Heart right ventricle (tissue), 16 donors: ENCODE measurements at regions of chr6 and their contacts with region 1.

Region 1: GRCh38 chr6:34161857-34162515 is 16.1 kb upstream of the GRM4 start:
- DNase-seq: no peak
- ATAC-seq: peak in 1 of 8 donors; percentile 40
- H3K4me3 ChIP-seq: no peak overlapping the region
- H3K27ac ChIP-seq: no peak overlapping the region
- H3K4me1 ChIP-seq: no peaks in the 10 kb centered on the region
- H3K27me3 ChIP-seq: no peaks in the 10 kb centered on the region
- CTCF ChIP-seq: no peak

Region 2: DNA sequence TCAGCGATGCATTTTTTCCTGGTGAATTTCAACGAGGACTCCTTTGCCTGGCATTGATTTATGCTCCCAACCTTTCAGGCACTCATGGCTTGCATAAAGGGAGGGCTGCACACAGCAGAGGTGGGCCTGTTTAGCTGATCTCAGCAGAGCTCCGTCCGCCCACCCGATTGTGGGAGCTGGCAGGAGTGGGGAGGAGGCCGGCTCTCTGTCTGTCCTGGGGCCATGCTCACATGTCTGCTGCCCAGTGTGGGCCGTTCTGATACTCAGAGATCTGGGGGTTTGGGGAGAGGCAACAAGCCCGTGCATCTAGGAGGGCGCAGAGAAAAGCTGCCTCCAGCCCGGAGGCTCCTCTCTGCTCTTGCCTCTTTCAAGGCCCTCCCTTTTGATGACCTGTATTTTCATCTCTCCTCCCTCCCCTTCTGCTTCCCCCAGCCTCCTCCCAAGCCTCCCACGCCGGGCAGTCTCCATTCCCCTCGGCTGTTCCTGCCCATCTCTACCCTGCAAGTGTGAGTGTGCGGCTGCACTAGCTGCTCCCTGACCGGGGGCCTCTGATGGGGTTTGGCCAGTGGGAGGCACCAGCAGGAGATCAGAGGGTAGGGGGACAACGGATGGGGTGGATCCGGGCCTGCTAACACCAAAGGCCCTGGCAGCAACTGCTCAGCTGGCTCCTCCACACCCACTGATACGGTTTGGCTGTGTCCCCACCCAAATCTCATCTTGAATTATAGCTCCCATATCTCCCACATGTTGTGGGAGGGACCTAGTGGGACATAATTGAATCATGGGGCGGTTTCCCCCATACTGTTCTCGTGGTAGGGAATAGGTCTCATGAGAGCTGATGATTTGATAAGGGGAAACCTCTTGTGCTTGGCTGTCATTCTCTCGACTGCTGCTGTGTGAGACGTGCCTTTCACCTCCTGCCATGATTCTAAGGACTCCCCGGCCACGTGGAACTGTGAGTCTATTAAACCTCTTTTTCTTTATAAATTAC is 318.6 kb before region 1 on chr6:
- intact Hi-C with region 1: no loop called
- DNase-seq: no peak
- ATAC-seq: no peak
- H3K4me3 ChIP-seq: no peak overlapping the region
- H3K27ac ChIP-seq: no peak overlapping the region
- H3K4me1 ChIP-seq: peaks cover 0 to 25% (median 3%) of the 10 kb centered on the region in 9 donors
- H3K27me3 ChIP-seq: peaks cover 0 to 13% (median 0%) of the 10 kb centered on the region in 7 donors
- CTCF ChIP-seq: no peak

Region 3: DNA sequence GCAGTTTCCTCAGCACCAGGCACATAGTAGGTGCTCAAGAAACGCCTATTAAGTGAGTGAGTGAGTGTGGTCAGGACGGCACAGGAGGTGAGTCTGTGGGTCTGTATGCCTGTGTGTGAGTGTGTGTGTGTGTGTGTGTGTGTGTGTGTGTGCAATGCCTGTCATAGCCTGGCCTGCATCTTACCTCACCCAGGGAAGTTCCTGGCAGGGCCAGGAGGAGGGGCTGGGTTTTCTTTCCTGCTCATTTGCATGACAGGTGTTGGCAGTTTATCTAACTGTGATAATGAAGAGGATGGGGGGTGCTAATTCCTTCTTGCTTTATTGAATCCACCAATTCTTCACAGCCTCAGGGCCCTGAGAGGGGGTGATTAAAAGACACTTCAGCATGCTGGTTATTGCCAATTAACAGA is 211.5 kb before region 1 on chr6:
- intact Hi-C with region 1: no loop called
- DNase-seq: no peak
- ATAC-seq: no peak
- H3K4me3 ChIP-seq: no peak overlapping the region
- H3K27ac ChIP-seq: no peak overlapping the region
- H3K4me1 ChIP-seq: no peaks in the 10 kb centered on the region
- H3K27me3 ChIP-seq: peaks cover 0 to 58% (median 19%) of the 10 kb centered on the region in 7 donors
- CTCF ChIP-seq: no peak

Region 4: GRCh38 chr6:34324738-34325444 is 162.9 kb after region 1 on chr6:
- intact Hi-C with region 1: no loop called
- DNase-seq: peak in 1 of 2 donors; percentile 60
- ATAC-seq: peak; percentile 86 to 96 (median 90)
- H3K4me3 ChIP-seq: no peak overlapping the region
- H3K27ac ChIP-seq: peak overlapping the region in 8 of 10 donors; percentile 28 to 70 (median 41)
- H3K4me1 ChIP-seq: peaks cover 0 to 31% (median 11%) of the 10 kb centered on the region in 9 donors
- H3K27me3 ChIP-seq: no peaks in the 10 kb centered on the region
- CTCF ChIP-seq: no peak

Region 5: GRCh38 chr6:34414999-34415858 is 253.2 kb after region 1 on chr6:
- intact Hi-C with region 1: loop called in 1 of 10 experiments (anchors 10 kb)
- DNase-seq: peak in 1 of 2 donors; percentile 75
- ATAC-seq: peak; percentile 80 to 95 (median 92)
- H3K4me3 ChIP-seq: no peak overlapping the region
- H3K27ac ChIP-seq: peak overlapping the region in 9 of 10 donors; percentile 13 to 70 (median 54)
- H3K4me1 ChIP-seq: peaks cover 0 to 18% (median 9%) of the 10 kb centered on the region in 9 donors
- H3K27me3 ChIP-seq: no peaks in the 10 kb centered on the region
- CTCF ChIP-seq: peak; percentile 61 to 89 (median 76)